ENCODE measurements at regions of chr12 and their contacts with region 1.

Region 1: GRCh38 chr12:56299853-56300643 is at the start of gene CS:
- DNase-seq: peak; percentile 100
- H3K4me3 ChIP-seq: peak within 1 kb of the TSS; percentile 67 to 95 (median 91)
- H3K27ac ChIP-seq: peak within 1 kb of the TSS; percentile 91 to 98 (median 95)
- H3K4me1 ChIP-seq: peaks cover 0 to 68% (median 46%) of the 10 kb centered on the region in 4 donors
- H3K27me3 ChIP-seq: no peaks in the 10 kb centered on the region
- CTCF ChIP-seq: no peak
- EP300 ChIP-seq: no peak
- POLR2A ChIP-seq: peak; percentile 49 to 82
- total RNA-seq, gene CS: 75.9 to 130 (median 99.6) TPM

Region 2: GRCh38 chr12:55885113-55885512 is 414.9 kb before region 1 on chr12:
- intact Hi-C with region 1: no loop called
- DNase-seq: no peak
- H3K4me3 ChIP-seq: no peak overlapping the region
- H3K27ac ChIP-seq: no peak overlapping the region
- H3K4me1 ChIP-seq: no peaks in the 10 kb centered on the region
- H3K27me3 ChIP-seq: no peaks in the 10 kb centered on the region
- CTCF ChIP-seq: no peak
- EP300 ChIP-seq: no peak
- POLR2A ChIP-seq: no peak

Region 3: GRCh38 chr12:56258057-56258819 is 41.8 kb before region 1 on chr12 and contains the start of gene ANKRD52:
- intact Hi-C with region 1: loop called (anchors 2 kb)
- DNase-seq: peak; percentile 87
- H3K4me3 ChIP-seq: peak within 1 kb of the TSS; percentile 80 to 86 (median 82)
- H3K27ac ChIP-seq: peak within 1 kb of the TSS; percentile 90 to 96 (median 92)
- H3K4me1 ChIP-seq: peaks cover 0 to 28% (median 26%) of the 10 kb centered on the region in 4 donors
- H3K27me3 ChIP-seq: no peaks in the 10 kb centered on the region
- CTCF ChIP-seq: peak in 2 of 4 experiments; percentile 11 to 90
- EP300 ChIP-seq: no peak
- POLR2A ChIP-seq: no peak
- total RNA-seq, gene ANKRD52: 8.4 to 19.1 (median 10.5) TPM

Region 4: DNA sequence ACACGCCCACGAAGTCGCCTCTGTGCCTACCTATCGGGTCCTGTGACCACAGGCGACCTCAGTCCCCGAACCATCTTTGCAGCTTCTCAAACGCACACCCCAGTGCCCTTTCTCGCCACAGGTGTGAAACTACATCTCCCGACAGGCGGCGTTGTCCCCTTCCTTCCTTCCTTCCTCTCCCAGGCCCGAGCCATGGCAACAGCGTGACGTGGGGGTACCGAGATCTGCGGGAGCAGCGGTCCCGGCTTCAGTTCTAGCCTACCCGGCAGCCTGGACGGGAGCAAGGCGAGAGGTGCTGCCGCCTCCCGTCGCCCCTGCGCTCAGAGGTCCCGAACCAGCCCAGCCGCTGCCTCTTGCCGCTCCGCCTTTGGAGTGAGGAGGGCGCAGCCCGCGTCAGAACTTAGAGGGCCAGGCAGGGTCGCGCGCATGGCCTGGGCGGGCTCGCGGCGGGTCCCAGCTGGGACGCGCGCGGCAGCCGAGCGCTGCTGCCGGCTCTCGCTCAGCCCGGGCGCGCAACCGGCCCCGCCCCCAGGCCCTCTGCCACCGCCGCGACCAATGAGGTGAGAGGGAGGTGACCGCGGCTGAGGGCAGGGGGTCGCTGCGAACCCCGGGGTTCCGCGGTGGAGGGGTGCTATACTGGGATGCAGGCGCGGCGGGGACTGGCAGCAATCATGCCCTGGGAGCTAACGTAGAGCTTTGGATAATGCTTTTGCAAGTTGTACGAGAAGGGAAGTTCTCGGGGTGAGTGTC is 33.2 kb before region 1 on chr12 and contains the start of gene COQ10A:
- intact Hi-C with region 1: loop called (anchors 2 kb)
- DNase-seq: peak; percentile 96
- H3K4me3 ChIP-seq: peak within 1 kb of the TSS; percentile 59 to 73 (median 70)
- H3K27ac ChIP-seq: peak within 1 kb of the TSS; percentile 95 to 97 (median 96)
- H3K4me1 ChIP-seq: peaks cover 0 to 19% (median 18%) of the 10 kb centered on the region in 4 donors
- H3K27me3 ChIP-seq: no peaks in the 10 kb centered on the region
- CTCF ChIP-seq: peak; percentile 71 to 91 (median 76)
- EP300 ChIP-seq: no peak
- POLR2A ChIP-seq: peak; percentile 73 to 88
- total RNA-seq, gene COQ10A: 11.8 to 25.0 (median 19.9) TPM

Measured in sigmoid colon (tissue), 7 donors.